Left ventricle myocardium superior (tissue), 1 donor: ENCODE measurements at regions of chr6 and their contacts with region 1.

Region 1: DNA sequence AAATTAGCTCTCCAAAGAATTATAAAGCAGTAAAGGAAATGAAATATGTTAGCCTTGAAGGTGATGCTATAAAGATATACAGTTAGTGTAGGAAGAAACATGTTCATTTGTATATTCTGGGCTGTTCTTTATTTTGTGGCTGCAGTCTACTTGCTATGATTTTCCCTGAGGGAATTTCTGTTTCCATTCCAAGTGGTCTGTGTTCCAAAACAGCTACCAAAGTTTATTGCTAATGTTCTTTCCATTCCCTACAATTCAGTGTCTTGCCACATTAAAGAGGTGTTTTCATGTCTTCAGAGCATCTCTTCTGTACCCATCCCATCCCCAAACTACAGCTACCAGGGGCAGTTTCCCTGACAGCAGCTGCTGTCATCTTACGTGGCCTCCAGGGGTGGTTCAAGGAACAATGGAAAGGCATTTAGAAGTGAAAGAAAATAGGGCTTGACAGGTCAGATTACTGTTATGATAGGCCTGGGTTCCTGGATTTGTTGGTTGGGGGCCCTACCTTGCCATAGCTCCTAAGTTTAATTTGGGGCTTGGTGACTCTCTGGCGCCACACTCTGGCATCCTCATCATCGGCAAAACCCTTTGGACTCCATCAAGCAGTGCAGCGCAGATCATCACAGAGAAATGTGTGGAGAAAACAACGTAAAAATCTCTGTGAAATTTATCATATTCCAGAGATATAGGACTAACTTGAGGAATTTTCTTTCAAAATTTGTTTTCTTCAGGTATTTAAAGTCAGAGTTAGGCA is 33.8 kb upstream of the AIG1 start:
- DNase-seq: peak; percentile 52
- ATAC-seq: peak; percentile 74

Region 2: GRCh38 chr6:142692942-142693341 is 333.9 kb before region 1 on chr6:
- intact Hi-C with region 1: loop called (anchors 5 kb)
- DNase-seq: peak; percentile 57
- ATAC-seq: peak; percentile 80

Region 3: DNA sequence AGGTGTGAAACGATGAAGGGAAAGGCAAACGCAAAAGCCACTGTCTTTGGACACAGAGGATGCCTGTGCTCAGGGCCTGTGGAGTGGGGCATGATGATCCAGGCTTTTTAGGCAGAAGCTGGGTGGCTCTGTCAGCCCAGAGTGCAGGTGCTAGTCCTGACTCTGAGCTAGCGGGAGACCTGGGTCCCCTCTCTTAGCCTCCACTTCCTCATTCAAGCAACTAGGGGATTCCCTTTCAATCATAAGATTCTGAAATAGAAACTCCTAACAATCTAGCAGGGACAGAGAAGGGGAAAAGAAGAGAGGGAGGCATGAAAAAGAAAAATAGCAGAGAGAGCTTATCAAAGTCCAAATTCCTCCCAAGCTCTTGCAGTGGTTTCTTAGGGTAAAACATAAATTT is 74.3 kb before region 1 on chr6:
- intact Hi-C with region 1: loop called (anchors 10 kb)
- DNase-seq: no peak
- ATAC-seq: no peak

Region 4: GRCh38 chr6:142966294-142966693 is 60.6 kb before region 1 on chr6:
- intact Hi-C with region 1: no loop called
- DNase-seq: no peak
- ATAC-seq: no peak